ENCODE measurements at regions of chr6 and their contacts with region 1.

Region 1: GRCh38 chr6:41367700-41368099 is 32.3 kb downstream of the NCR2 start:
- DNase-seq: peak in 1 of 9 donors; percentile 20
- ATAC-seq: no peak
- H3K4me3 ChIP-seq: no peak overlapping the region
- H3K4me3 Mint-ChIP-seq: no peak overlapping the region
- H3K27ac ChIP-seq: no peak overlapping the region
- H3K27ac Mint-ChIP-seq: no peak overlapping the region
- H3K4me1 ChIP-seq: peaks cover 7 to 9% of the 10 kb centered on the region in 2 donors
- H3K4me1 Mint-ChIP-seq: peaks cover 17 to 27% (median 22%) of the 10 kb centered on the region in 7 donors
- H3K27me3 ChIP-seq: peaks cover 4 to 8% of the 10 kb centered on the region in 2 donors
- H3K27me3 Mint-ChIP-seq: peaks cover 45 to 78% (median 58%) of the 10 kb centered on the region in 5 donors

Region 2: GRCh38 chr6:41306187-41306854 is 61.4 kb before region 1 on chr6:
- CTCF ChIA-PET with region 1: interaction called, 3 read pairs
- POLR2A ChIA-PET with region 1: no interaction called
- intact Hi-C with region 1: loop called (anchors 1 kb)
- DNase-seq: peak in 7 of 9 donors; percentile 20 to 53 (median 35)
- ATAC-seq: no peak
- H3K4me3 ChIP-seq: no peak overlapping the region
- H3K4me3 Mint-ChIP-seq: no peak overlapping the region
- H3K27ac ChIP-seq: no peak overlapping the region
- H3K27ac Mint-ChIP-seq: no peak overlapping the region
- H3K4me1 ChIP-seq: no peaks in the 10 kb centered on the region
- H3K4me1 Mint-ChIP-seq: peaks cover 7 to 28% (median 20%) of the 10 kb centered on the region in 7 donors
- H3K27me3 ChIP-seq: no peaks in the 10 kb centered on the region
- H3K27me3 Mint-ChIP-seq: peaks cover 0 to 45% (median 0%) of the 10 kb centered on the region in 5 donors

Region 3: GRCh38 chr6:41344876-41345275 is 22.8 kb before region 1 on chr6:
- CTCF ChIA-PET with region 1: interaction called, 4 read pairs
- POLR2A ChIA-PET with region 1: no interaction called
- intact Hi-C with region 1: loop called in 1 of 2 experiments (anchors 1 kb)
- DNase-seq: peak in 7 of 9 donors; percentile 26 to 68 (median 57)
- ATAC-seq: peak; percentile 94
- H3K4me3 ChIP-seq: no peak overlapping the region
- H3K4me3 Mint-ChIP-seq: peak overlapping the region in 9 of 10 donors; percentile 34 to 73 (median 53)
- H3K27ac ChIP-seq: peak overlapping the region; percentile 26
- H3K27ac Mint-ChIP-seq: peak overlapping the region; percentile 63 to 90 (median 85)
- H3K4me1 ChIP-seq: peaks cover 16 to 18% of the 10 kb centered on the region in 2 donors
- H3K4me1 Mint-ChIP-seq: peaks cover 20 to 42% (median 32%) of the 10 kb centered on the region in 7 donors
- H3K27me3 ChIP-seq: no peaks in the 10 kb centered on the region
- H3K27me3 Mint-ChIP-seq: peaks cover 0 to 26% (median 0%) of the 10 kb centered on the region in 5 donors

Region 4: GRCh38 chr6:41442800-41443501 is 75.3 kb after region 1 on chr6:
- CTCF ChIA-PET with region 1: interaction called, 3 read pairs
- POLR2A ChIA-PET with region 1: no interaction called
- intact Hi-C with region 1: loop called in 1 of 2 experiments (anchors 5 kb)
- DNase-seq: no peak
- ATAC-seq: no peak
- H3K4me3 ChIP-seq: no peak overlapping the region
- H3K4me3 Mint-ChIP-seq: peak overlapping the region in 5 of 10 donors; percentile 17 to 75 (median 41)
- H3K27ac ChIP-seq: no peak overlapping the region
- H3K27ac Mint-ChIP-seq: no peak overlapping the region
- H3K4me1 ChIP-seq: peaks cover 36 to 37% of the 10 kb centered on the region in 2 donors
- H3K4me1 Mint-ChIP-seq: peaks cover 37 to 44% (median 40%) of the 10 kb centered on the region in 7 donors
- H3K27me3 ChIP-seq: no peaks in the 10 kb centered on the region
- H3K27me3 Mint-ChIP-seq: peaks cover 9 to 49% (median 19%) of the 10 kb centered on the region in 5 donors

Region 5: DNA sequence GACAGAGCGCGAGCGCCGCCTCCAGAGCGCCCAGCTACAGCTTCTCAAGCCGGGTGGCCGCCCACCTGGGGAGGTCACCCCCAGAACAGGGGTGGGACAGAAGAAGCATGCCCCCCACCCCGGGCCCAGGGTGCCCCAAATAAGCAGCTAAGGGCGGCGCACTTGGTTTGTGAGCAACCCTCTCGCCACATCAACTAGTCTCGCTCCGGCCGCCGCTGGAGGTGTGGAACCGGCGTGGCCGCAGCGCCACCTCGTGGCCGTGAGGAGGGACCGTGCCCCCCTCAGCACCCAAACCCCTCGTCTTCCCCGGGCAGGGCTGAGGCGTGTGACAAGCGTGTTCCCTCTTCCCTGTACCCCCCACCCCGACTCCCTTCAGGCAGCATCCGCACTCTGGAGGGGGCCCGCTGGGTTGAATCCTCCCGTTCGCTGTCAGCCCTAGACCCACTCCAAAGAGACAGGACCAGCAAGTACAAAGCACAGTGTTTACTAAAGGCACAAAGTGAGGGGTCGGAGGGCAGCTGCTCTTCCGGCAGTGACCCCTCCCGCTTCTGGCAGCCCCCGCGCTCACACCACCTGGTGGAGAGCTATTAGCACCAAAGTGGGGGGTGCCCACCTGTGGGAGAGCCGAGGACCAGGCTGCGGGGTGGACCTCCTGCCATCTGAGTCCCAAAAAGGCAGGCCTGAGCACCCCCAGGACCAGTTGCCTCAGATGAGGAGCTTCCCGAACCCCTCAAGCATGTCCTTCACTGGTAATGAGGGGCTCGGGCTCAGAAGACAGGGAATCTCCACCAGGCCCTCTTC is 316.0 kb after region 1 on chr6:
- CTCF ChIA-PET with region 1: interaction called, 4 read pairs
- POLR2A ChIA-PET with region 1: no interaction called
- intact Hi-C with region 1: loop called (anchors 1 kb)
- DNase-seq: peak; percentile 57 to 83 (median 76)
- ATAC-seq: peak; percentile 91
- H3K4me3 ChIP-seq: peak overlapping the region; percentile 61
- H3K4me3 Mint-ChIP-seq: peak overlapping the region; percentile 51 to 84 (median 78)
- H3K27ac ChIP-seq: peak overlapping the region; percentile 53
- H3K27ac Mint-ChIP-seq: peak overlapping the region in 8 of 9 donors; percentile 43 to 86 (median 76)
- H3K4me1 ChIP-seq: peaks cover 3 to 4% of the 10 kb centered on the region in 2 donors
- H3K4me1 Mint-ChIP-seq: peaks cover 0 to 15% (median 11%) of the 10 kb centered on the region in 7 donors
- H3K27me3 ChIP-seq: no peaks in the 10 kb centered on the region
- H3K27me3 Mint-ChIP-seq: peaks cover 0 to 4% (median 0%) of the 10 kb centered on the region in 5 donors

Region 6: GRCh38 chr6:42652024-42652746 is 1284.5 kb after region 1 on chr6:
- CTCF ChIA-PET with region 1: no interaction called
- POLR2A ChIA-PET with region 1: no interaction called
- intact Hi-C with region 1: no loop called
- DNase-seq: no peak
- ATAC-seq: no peak
- H3K4me3 ChIP-seq: no peak overlapping the region
- H3K4me3 Mint-ChIP-seq: no peak overlapping the region
- H3K27ac ChIP-seq: peak overlapping the region; percentile 13
- H3K27ac Mint-ChIP-seq: peak overlapping the region in 1 of 9 donors; percentile 6
- H3K4me1 ChIP-seq: no peaks in the 10 kb centered on the region
- H3K4me1 Mint-ChIP-seq: peaks cover 0 to 1% (median 0%) of the 10 kb centered on the region in 7 donors
- H3K27me3 ChIP-seq: no peaks in the 10 kb centered on the region
- H3K27me3 Mint-ChIP-seq: no peaks in the 10 kb centered on the region